Pancreas (tissue), 10 donors: ENCODE measurements at regions of chr19 and their contacts with region 1.

Region 1: GRCh38 chr19:6038634-6039405 is 60.9 kb upstream of the RANBP3 start:
- DNase-seq: no peak
- ATAC-seq: no peak
- H3K4me3 ChIP-seq: no peak overlapping the region
- H3K27ac ChIP-seq: no peak overlapping the region
- H3K4me1 ChIP-seq: no peaks in the 10 kb centered on the region
- H3K27me3 ChIP-seq: no peaks in the 10 kb centered on the region
- CTCF ChIP-seq: no peak

Region 2: GRCh38 chr19:6086068-6086788 is 47.4 kb after region 1 on chr19:
- intact Hi-C with region 1: no loop called
- DNase-seq: no peak
- ATAC-seq: no peak
- H3K4me3 ChIP-seq: no peak overlapping the region
- H3K27ac ChIP-seq: no peak overlapping the region
- H3K4me1 ChIP-seq: peaks cover 0 to 9% (median 0%) of the 10 kb centered on the region in 3 donors
- H3K27me3 ChIP-seq: peaks cover 0 to 2% (median 0%) of the 10 kb centered on the region in 4 donors
- CTCF ChIP-seq: no peak

Region 3: GRCh38 chr19:6199240-6199983 is 160.6 kb after region 1 on chr19:
- intact Hi-C with region 1: loop called in 1 of 3 experiments (anchors 10 kb)
- DNase-seq: peak; percentile 98 to 100 (median 100)
- ATAC-seq: peak; percentile 93 to 97 (median 96)
- H3K4me3 ChIP-seq: peak overlapping the region; percentile 55 to 84 (median 60)
- H3K27ac ChIP-seq: peak overlapping the region; percentile 11 to 79 (median 56)
- H3K4me1 ChIP-seq: peaks cover 0 to 12% (median 0%) of the 10 kb centered on the region in 3 donors
- H3K27me3 ChIP-seq: no peaks in the 10 kb centered on the region
- CTCF ChIP-seq: peak in 2 of 4 donors; percentile 23 to 35